AG04450 (cell line): ENCODE measurements at regions of chr7 and their contacts with region 1.

Region 1: GRCh38 chr7:134684165-134684564 is 37.5 kb downstream of the BPGM start:
- DNase-seq: no peak
- H3K4me3 ChIP-seq: no peak overlapping the region
- H3K27ac ChIP-seq: no peak overlapping the region
- H3K27me3 ChIP-seq: no peaks in the 10 kb centered on the region
- CTCF ChIP-seq: no peak

Region 2: GRCh38 chr7:134220236-134220635 is 463.9 kb before region 1 on chr7:
- CTCF ChIA-PET with region 1: no interaction called
- POLR2A ChIA-PET with region 1: no interaction called
- DNase-seq: no peak
- H3K4me3 ChIP-seq: no peak overlapping the region
- H3K27ac ChIP-seq: no peak overlapping the region
- H3K27me3 ChIP-seq: no peaks in the 10 kb centered on the region
- CTCF ChIP-seq: no peak

Region 3: GRCh38 chr7:134739362-134739761 is 55.2 kb after region 1 on chr7:
- CTCF ChIA-PET with region 1: no interaction called
- POLR2A ChIA-PET with region 1: no interaction called
- DNase-seq: no peak
- H3K4me3 ChIP-seq: no peak overlapping the region
- H3K27ac ChIP-seq: no peak overlapping the region
- H3K27me3 ChIP-seq: no peaks in the 10 kb centered on the region
- CTCF ChIP-seq: no peak

Region 4: GRCh38 chr7:134986363-134987251 is 302.4 kb after region 1 on chr7 and contains the start of gene AGBL3:
- CTCF ChIA-PET with region 1: interaction called, 7 read pairs
- POLR2A ChIA-PET with region 1: interaction called, 13 read pairs
- DNase-seq: peak; percentile 89
- H3K4me3 ChIP-seq: peak within 1 kb of the TSS; percentile 87
- H3K27ac ChIP-seq: peak within 1 kb of the TSS; percentile 73
- H3K27me3 ChIP-seq: no peaks in the 10 kb centered on the region
- CTCF ChIP-seq: peak; percentile 65
- polyA plus RNA-seq, gene AGBL3: 0.32 and 0.38 TPM in 2 replicates